Activated CD8-positive, alpha-beta memory T cell treated with anti-CD3 and anti-CD28 coated beads, Interleukin-2, amount 10 ng/mL, durations not matched to agents 7 days and 5 days (primary cell): ENCODE measurements at regions of chr1 and their contacts with region 1.

Region 1: GRCh38 chr1:54800899-54801759 is at the start of gene TTC22:
- DNase-seq: peak; percentile 91
- ATAC-seq: peak; percentile 80
- H3K4me3 Mint-ChIP-seq: peak within 1 kb of the TSS; percentile 84
- H3K27ac Mint-ChIP-seq: peak within 1 kb of the TSS; percentile 97
- H3K4me1 Mint-ChIP-seq: peaks cover 70% of the 10 kb centered on the region
- H3K27me3 Mint-ChIP-seq: no peaks in the 10 kb centered on the region
- total RNA-seq, gene TTC22: 9.1 to 17.9 TPM

Region 2: DNA sequence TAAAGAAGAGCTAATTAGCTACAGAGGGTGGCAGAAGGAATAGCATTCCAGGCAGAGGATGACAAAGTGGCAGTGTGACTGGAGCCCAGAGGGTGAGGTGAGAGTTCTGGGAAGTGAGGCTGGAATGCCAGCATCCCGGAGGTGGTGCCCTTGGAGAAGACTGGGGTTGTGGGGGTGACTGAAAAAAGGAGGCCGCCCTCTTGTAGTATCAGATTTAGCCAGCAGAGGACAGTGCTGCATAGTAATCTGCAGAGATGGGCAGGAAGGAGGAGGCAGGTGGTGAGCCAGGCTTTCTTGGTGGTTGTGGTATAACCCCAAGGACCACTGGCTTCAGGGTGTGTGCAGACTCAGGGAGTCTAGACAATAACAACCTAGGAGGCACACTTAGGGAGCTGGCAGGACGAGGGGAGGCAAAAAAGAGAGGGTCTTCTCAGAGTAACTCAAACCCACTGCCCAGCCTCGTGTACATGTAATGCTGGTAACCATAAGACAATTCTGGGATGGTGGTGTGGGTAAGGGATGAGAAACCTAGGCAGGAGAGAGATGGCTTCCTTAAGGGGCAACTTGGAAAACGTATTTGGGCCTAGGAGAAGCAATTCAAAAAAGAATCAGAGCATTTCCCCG is 129.0 kb before region 1 on chr1:
- CTCF ChIA-PET with region 1: interaction called, 37 read pairs
- DNase-seq: peak; percentile 90
- ATAC-seq: peak; percentile 94
- H3K4me3 Mint-ChIP-seq: peak overlapping the region; percentile 5
- H3K27ac Mint-ChIP-seq: peak overlapping the region; percentile 73
- H3K4me1 Mint-ChIP-seq: peaks cover 14% of the 10 kb centered on the region
- H3K27me3 Mint-ChIP-seq: peaks cover 29% of the 10 kb centered on the region

Region 3: DNA sequence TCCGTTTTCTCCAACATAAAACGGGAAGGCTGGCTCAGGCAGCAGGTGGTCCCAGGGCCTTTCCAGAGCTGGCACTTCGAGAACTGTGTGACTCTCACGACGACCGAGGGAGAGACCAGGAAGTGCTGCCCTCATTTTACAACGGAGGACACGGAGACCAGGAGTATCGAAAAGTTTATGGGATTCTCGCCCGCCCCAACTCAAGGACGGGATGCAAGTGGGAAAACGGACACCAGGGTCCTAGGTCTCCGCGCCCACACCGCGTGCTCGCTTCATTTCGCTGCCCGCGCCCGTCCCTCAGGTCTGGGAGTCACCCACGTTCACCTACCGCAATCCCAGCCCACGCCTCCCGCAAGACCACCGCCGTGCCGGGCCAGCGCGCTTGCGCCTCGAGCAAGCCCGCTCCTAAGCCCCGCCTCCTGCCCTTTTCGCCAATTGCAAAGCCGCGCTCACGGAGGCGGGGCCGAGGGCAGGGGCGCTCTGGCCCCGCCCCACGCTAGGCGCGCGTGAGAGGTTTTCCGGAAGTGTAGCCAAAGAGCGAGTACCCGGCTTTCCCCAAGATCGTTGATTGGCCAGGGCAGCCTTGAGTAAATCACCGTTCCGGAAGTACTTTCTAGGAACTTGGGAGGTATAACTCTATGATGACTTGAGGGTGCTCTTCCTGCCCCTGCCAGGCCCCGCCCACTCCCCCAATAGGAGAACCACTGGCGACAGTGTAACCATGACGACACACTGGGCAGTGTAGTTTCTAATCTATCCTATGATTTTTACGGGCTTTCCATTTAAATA is 36.8 kb before region 1 on chr1 and contains the start of gene PARS2:
- CTCF ChIA-PET with region 1: interaction called, 20 read pairs
- DNase-seq: peak; percentile 97
- ATAC-seq: peak; percentile 97
- H3K4me3 Mint-ChIP-seq: peak within 1 kb of the TSS; percentile 92
- H3K27ac Mint-ChIP-seq: peak within 1 kb of the TSS; percentile 90
- H3K4me1 Mint-ChIP-seq: peaks cover 18% of the 10 kb centered on the region
- H3K27me3 Mint-ChIP-seq: no peaks in the 10 kb centered on the region
- total RNA-seq, gene PARS2: 5.0 to 6.4 TPM

Region 4: DNA sequence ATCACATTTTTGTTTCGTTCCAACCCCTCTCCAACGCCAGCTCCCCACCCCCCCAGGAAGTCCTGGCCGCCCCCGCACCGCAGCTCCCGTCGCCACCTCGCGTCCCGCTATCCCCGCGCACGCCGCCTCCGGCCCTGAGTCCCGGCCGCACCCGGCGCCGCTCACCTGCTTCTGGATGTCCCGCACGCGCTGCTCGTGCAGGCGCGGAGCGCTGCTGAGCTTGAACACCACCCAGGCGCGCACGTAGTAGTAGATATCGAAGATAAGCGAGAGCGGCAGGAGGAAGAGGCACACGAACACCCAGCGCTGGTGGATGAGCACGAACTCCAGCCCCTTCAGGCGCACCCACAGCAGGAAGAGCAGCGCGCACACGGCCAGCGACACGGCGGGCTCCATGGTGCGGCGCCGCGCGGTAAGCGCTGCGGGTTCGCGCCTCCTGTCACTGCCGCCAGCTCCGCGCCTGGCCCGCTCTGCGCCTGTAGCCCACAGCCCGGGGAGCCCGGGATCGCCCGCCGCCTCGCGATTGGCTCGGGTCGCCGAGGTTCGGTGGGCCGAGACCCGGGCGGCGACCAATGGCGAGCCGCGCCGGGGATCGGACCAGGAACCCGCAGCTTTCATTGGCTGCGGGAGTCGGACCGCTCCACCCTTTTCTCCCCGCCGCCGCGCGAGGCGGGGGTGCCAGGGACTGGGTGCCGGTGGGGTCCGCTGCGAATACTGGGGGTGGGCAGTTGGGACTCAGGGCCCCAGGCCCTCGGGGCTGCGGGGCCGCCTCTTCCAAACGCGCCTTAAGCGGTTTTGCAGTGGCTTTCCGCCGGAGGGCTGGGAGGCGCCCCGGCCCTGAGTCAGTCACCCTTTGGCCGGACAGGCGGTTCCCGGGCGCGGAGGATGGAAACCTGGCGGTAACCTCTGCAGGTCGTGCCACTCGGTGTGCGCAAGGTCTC is 85.9 kb after region 1 on chr1 and contains the start of gene DHCR24:
- CTCF ChIA-PET with region 1: interaction called, 12 read pairs
- DNase-seq: peak; percentile 87
- ATAC-seq: peak; percentile 98
- H3K4me3 Mint-ChIP-seq: peak within 1 kb of the TSS; percentile 99
- H3K27ac Mint-ChIP-seq: peak within 1 kb of the TSS; percentile 79
- H3K4me1 Mint-ChIP-seq: peaks cover 51% of the 10 kb centered on the region
- H3K27me3 Mint-ChIP-seq: peaks cover 26% of the 10 kb centered on the region
- total RNA-seq, gene DHCR24: 121 to 187 TPM